Testis (tissue), 5 donors: ENCODE measurements at regions of chr2 and their contacts with region 1.

Region 1: GRCh38 chr2:96407041-96407918 is 71.7 kb downstream of the NCAPH start:
- DNase-seq: peak; percentile 70
- H3K4me3 ChIP-seq: no peak overlapping the region
- H3K27ac ChIP-seq: peak overlapping the region; percentile 47 to 50
- H3K4me1 ChIP-seq: peaks cover 36% of the 10 kb centered on the region
- H3K27me3 ChIP-seq: no peaks in the 10 kb centered on the region
- CTCF ChIP-seq: peak; percentile 69 to 77 (median 71)
- POLR2A ChIP-seq: no peak

Region 2: DNA sequence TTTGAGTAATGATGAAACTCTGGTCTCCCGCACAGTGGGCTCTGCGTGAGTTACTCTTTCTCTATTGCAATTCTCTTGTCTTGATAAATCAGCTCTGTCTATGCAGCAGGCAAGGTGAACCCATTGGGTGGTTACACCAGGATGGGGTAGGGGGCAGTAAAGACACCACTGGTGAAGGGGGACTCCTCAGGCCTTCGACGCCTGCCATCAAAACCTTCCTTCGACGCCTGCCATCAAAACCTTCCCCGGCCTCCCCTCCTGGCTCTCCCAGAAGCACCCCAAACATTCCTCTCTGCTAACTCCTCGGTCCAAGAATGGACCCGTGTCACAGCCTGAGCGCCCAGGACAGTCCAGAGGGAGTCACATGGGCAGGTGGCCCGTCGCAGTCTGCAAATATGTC is 193.9 kb before region 1 on chr2:
- intact Hi-C with region 1: no loop called
- DNase-seq: no peak
- H3K4me3 ChIP-seq: no peak overlapping the region
- H3K27ac ChIP-seq: no peak overlapping the region
- H3K4me1 ChIP-seq: peaks cover 10% of the 10 kb centered on the region
- H3K27me3 ChIP-seq: no peaks in the 10 kb centered on the region
- CTCF ChIP-seq: no peak
- POLR2A ChIP-seq: no peak

Region 3: GRCh38 chr2:96509114-96509846 is 102.0 kb after region 1 on chr2:
- intact Hi-C with region 1: loop called (anchors 10 kb)
- DNase-seq: peak; percentile 91
- H3K4me3 ChIP-seq: no peak overlapping the region
- H3K27ac ChIP-seq: no peak overlapping the region
- H3K4me1 ChIP-seq: peaks cover 6% of the 10 kb centered on the region
- H3K27me3 ChIP-seq: no peaks in the 10 kb centered on the region
- CTCF ChIP-seq: peak; percentile 94 to 98 (median 97)
- POLR2A ChIP-seq: no peak